ENCODE measurements at regions of chr5 and their contacts with region 1.

Region 1: GRCh38 chr5:264346-264745 is 7.1 kb upstream of the PDCD6 start:
- DNase-seq: no peak
- ATAC-seq: no peak; the same call in 2 of the 3 replicates
- H3K4me3 ChIP-seq: no peak overlapping the region
- H3K27ac ChIP-seq: no peak overlapping the region
- H3K4me1 ChIP-seq: no peaks in the 10 kb centered on the region
- H3K27me3 ChIP-seq: no peaks in the 10 kb centered on the region
- CTCF ChIP-seq: no peak
- EP300 ChIP-seq: no peak
- POLR2A ChIP-seq: no peak
- RAD21 ChIP-seq: no peak

Region 2: DNA sequence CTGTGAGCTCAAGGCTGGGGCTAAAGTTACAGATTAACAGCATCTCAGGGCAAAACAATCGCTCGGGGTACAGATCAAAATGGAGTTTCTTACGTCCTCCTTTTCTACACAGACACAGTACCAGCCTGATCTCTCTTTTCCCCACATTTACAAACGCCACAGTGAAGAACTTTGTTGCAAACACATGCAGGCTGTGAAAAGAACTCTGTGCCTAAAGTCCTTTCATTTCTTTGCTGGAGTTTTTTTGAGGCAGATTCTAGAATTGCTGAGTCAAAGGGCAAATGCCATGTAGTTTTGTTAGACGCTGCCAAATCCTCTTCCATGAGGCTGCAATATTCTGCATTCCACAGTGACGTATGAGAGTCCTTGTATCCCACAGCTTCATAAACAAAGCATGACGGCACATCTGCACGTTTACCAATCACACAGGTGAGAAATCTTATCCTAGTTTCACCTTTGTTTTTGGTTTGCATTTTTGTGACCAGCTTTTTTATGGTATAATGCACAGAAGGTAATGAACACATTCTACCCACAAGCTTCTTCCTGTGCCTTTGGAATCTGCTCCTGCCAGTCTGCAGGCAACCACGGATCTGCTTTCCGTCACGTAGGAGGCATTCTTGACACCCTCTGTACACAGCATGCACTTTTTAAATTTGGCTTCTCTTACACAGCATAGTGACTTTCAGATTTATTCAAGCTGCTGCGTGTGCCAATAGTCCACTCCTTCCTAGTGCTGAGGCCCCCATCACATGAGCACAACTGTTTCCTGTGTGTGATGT is 1304.0 kb after region 1 on chr5:
- CTCF ChIA-PET with region 1: no interaction called
- POLR2A ChIA-PET with region 1: no interaction called
- in situ Hi-C with region 1: loop called (anchors 5 kb)
- intact Hi-C with region 1: no loop called
- DNase-seq: no peak
- ATAC-seq: no peak
- H3K4me3 ChIP-seq: no peak overlapping the region
- H3K27ac ChIP-seq: no peak overlapping the region
- H3K4me1 ChIP-seq: peaks cover 0 to 13% of the 10 kb centered on the region in 2 experiments; a peak in 2 of 5 replicates
- H3K27me3 ChIP-seq: peaks cover 11 to 32% of the 10 kb centered on the region in 2 experiments; a peak in 4 of 5 replicates
- CTCF ChIP-seq: no peak
- EP300 ChIP-seq: no peak
- POLR2A ChIP-seq: no peak
- RAD21 ChIP-seq: no peak

Measured in K562 (cell line).